Activated CD8-positive, alpha-beta T cell treated with anti-CD3 and anti-CD28 coated beads, Interleukin-2, amount 10 ng/mL, durations not matched to agents 7 days and 5 days (primary cell): ENCODE measurements at regions of chr17 and their contacts with region 1.

Region 1: DNA sequence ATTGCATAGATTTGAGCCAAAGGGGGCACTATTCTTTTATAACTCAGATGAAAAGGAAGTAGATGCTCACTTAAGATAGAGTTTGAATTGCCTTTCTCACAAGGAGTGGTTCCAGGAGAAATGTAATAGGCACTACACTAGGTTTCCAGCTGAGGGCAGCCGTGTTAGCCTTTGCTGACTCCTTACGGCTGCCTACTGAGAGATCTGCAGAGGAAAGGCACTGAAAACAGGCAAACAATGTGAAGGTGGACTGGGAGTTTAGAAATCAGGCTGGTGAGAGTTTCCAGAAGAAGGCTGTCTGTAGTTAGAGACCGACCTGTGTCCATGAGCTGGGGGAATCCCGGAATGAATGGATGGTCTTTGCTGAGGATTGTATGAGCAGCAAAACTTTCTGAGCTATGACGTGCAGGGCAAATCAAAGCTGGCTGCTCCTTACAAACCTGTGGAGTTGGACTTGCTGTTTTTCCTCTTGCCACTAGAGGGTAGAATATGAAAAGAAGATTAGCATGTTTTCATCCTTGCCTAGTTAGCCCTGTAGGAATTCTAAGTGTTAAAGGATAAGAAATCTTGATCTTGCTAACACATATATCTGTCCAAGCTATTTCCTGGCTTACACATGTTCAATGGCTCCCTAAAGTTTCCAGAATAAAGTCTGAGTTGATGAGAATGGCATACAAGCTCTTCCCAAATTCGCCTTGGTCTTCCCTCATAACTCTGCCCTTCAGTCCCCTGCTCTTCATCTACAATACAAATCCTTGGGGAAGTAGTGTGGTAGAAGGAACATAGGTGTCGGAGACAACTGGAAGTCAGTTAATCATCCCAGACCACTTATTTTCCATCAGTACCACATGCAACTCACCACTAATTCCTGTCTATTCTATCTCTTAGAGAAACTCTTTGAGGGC is 20.1 kb upstream of the TAOK1 start:
- DNase-seq: peak; percentile 60
- ATAC-seq: peak; percentile 93
- H3K4me3 Mint-ChIP-seq: no peak overlapping the region
- H3K27ac Mint-ChIP-seq: no peak overlapping the region
- H3K4me1 Mint-ChIP-seq: no peaks in the 10 kb centered on the region
- H3K27me3 Mint-ChIP-seq: no peaks in the 10 kb centered on the region

Region 2: DNA sequence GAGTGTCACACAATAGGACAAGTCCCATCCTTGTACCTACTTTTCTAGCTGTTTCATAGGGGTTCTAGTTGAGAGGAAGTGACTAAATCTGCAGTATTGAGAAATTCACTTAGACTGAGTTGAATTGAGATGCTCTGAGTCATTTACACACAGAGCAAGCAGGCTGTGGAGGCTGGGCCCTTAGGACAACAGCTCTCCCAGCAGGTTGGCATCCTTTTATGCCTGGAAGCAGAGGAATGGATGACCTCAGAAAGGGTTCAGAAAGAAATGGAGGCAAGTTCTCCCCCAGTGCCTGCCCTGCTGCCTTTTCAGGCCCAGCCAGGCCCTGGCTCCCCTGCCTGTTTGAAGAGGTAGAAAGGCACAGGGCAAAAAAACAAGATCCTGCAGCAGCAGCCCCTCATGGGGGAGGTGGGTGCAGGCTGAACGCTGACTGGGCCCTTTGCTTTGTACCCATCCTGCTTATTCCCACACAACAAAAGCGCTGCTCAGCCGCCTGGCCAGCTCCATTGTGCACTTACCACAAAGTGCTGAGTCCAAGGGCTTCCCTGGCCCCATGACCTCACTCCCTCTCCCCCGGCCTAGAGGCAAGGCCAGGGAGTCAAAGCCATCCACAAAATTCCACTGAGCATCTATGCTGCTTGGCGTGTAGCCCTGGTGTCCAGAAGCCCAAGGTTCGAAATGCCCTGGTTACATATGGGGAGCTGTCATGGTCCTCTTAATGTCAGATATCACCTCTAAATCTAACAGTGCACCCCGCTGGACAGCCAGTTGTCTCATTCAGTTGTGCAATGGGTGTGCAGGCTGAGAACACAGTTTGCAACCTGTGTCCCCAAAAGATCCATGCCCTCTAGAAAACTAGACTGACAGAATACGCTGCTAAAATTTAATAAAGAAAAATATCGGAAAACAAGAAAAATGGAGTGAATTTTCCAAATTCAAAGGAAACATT is 128.8 kb before region 1 on chr17:
- CTCF ChIA-PET with region 1: no interaction called
- POLR2A ChIA-PET with region 1: no interaction called
- DNase-seq: no peak
- ATAC-seq: no peak
- H3K4me3 Mint-ChIP-seq: no peak overlapping the region
- H3K27ac Mint-ChIP-seq: no peak overlapping the region
- H3K4me1 Mint-ChIP-seq: peaks cover 11% of the 10 kb centered on the region
- H3K27me3 Mint-ChIP-seq: no peaks in the 10 kb centered on the region

Region 3: GRCh38 chr17:29357821-29358232 is 12.3 kb before region 1 on chr17:
- CTCF ChIA-PET with region 1: interaction called, 25 read pairs
- POLR2A ChIA-PET with region 1: no interaction called
- DNase-seq: no peak
- ATAC-seq: no peak
- H3K4me3 Mint-ChIP-seq: no peak overlapping the region
- H3K27ac Mint-ChIP-seq: no peak overlapping the region
- H3K4me1 Mint-ChIP-seq: peaks cover 1% of the 10 kb centered on the region
- H3K27me3 Mint-ChIP-seq: peaks cover 2% of the 10 kb centered on the region

Region 4: DNA sequence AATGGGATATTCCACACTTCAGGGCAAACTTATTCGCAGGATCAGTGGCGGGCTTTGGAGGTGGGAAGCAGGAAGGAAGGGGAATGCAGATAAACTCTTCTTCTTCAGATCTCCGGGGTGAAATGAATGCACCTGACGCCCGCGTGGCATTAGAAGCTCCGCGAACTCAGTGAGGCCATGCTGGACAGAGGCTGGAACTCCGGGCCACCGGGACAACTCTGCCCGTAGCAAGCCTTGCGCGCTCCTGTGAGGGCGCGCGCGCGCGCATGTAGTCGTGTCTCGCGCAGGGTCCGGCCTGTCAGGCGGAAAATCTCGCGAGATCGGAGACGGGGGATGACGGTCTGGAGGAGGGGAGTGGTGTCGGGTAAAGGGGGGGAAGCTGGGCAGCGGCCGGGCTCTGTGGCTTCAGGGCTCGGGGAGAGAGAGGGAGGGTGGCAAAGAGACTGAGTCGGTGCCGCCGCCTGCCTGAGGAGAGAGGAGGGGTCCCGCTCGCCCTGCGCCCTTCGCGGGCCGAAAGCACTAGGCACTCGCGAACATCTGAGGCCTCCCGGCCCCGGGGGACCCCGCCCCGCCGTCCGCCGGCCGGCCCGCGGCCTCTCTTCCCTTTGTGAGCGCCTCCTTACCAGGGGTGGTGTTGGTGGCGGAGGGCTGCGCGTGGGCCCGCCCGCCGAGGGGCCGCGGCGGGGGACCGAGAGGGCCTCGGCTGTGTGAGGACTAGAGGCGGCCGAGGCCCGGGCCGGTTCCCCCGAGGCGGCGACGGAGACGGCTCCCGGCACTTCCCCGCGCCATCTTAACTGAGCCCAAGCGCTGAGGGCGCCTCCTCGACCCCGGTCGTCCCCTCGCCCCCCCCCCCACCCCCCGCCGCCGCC is 20.1 kb after region 1 on chr17 and contains the start of gene TAOK1:
- CTCF ChIA-PET with region 1: interaction called, 42 read pairs
- POLR2A ChIA-PET with region 1: interaction called, 3 read pairs
- DNase-seq: peak; percentile 99
- ATAC-seq: peak; percentile 96
- H3K4me3 Mint-ChIP-seq: peak within 1 kb of the TSS; percentile 91
- H3K27ac Mint-ChIP-seq: peak within 1 kb of the TSS; percentile 92
- H3K4me1 Mint-ChIP-seq: peaks cover 40% of the 10 kb centered on the region
- H3K27me3 Mint-ChIP-seq: no peaks in the 10 kb centered on the region
- total RNA-seq, gene TAOK1: 51.7 to 53.0 TPM

Region 5: GRCh38 chr17:29524460-29525091 is 154.5 kb after region 1 on chr17:
- CTCF ChIA-PET with region 1: interaction called, 20 read pairs
- POLR2A ChIA-PET with region 1: no interaction called
- DNase-seq: no peak
- ATAC-seq: no peak
- H3K4me3 Mint-ChIP-seq: no peak overlapping the region
- H3K27ac Mint-ChIP-seq: no peak overlapping the region
- H3K4me1 Mint-ChIP-seq: no peaks in the 10 kb centered on the region
- H3K27me3 Mint-ChIP-seq: no peaks in the 10 kb centered on the region

Region 6: DNA sequence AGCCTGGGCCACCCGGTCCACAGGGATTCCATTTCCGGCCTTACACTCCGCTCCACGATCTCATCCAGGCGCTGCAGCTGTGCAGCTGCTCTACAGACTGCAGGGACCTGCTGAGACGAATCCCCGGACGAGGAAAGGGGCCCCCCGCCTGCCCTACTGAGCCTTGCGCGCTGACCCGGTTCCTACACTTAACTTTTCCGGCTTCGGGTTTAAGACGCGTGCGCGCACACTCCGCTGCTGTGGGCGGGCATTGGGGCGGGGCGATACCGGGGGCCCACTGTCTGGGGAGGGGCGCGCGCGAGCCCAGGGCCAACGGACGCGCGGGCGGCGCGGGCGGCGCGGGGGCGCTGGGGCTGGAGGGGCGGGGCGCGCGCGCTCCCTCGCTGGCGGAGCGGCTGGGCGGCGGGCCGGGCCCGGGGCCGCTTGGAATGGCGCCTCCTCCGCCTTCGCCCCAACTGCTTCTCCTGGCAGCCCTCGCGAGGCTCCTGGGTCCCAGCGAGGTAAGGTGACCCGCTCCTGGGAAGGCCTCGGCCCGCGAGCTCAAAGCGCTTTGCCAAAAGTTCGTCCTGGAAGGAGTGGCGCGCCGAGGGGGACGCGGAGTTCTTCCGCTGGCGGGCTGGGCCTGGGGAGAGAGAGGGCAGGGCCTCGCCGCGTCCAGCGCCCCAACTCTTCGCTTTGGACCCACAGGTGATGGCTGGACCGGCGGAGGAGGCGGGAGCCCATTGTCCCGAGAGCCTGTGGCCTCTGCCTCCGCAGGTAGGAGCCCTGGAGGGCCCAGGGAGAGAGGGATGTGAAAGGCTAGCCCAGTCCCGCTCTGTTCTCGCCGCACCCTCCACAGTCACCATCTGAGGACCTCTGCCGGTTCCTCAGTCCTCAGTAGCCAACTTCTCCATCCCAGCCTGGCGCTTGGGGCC is 198.5 kb after region 1 on chr17 and contains the start of gene TP53I13:
- CTCF ChIA-PET with region 1: interaction called, 70 read pairs
- POLR2A ChIA-PET with region 1: no interaction called
- DNase-seq: peak; percentile 92
- ATAC-seq: peak; percentile 63
- H3K4me3 Mint-ChIP-seq: peak within 1 kb of the TSS; percentile 94
- H3K27ac Mint-ChIP-seq: peak within 1 kb of the TSS; percentile 98
- H3K4me1 Mint-ChIP-seq: peaks cover 35% of the 10 kb centered on the region
- H3K27me3 Mint-ChIP-seq: no peaks in the 10 kb centered on the region
- total RNA-seq, gene TP53I13: 96.7 to 97.9 TPM